Left cardiac atrium (tissue), 4 donors: ENCODE measurements at regions of chr21 and their contacts with region 1.

Region 1: GRCh38 chr21:40466893-40467501 is 380.0 kb downstream of the DSCAM start:
- DNase-seq: no peak
- ATAC-seq: no peak

Region 2: DNA sequence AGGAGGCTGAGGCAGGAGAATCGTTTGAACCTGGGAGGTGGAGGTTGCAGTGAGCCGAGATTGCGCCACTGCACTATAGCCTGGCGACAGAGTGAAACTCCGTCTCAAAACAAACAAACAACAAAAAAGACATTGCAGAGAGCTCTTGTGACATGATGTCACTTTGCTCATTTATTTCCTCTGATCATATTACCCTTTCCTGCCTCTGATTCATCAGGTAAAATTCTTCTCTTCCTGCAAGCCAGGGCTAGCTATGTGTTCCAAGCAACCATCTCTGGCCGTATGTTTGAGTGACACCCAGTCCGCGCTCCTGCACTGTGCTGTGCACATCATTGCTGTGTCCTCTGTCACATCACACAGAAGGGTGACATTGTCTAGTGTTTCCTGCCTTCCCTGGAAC is 348.5 kb before region 1 on chr21:
- intact Hi-C with region 1: no loop called
- DNase-seq: no peak
- ATAC-seq: no peak

Region 3: DNA sequence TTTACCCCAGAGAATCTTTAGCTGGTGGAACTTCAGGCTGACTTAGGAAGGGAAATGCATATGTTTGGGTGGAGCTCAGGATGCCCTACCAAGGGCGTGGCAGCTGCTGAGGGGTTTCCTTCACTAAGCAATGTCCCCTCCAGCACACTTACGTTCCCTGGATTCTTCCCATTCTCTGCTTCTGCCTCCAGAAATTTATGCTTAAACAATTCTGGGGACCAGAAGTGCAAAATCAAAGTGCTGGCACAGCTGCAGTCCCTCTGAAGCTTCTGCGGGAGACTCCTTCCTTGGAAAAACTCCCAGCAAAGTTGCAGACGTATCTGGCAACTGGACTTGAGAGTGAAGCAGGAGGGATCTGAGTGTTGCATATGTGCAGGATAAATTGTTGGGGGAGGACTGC is 196.9 kb before region 1 on chr21:
- intact Hi-C with region 1: no loop called
- DNase-seq: no peak
- ATAC-seq: no peak

Region 4: GRCh38 chr21:40512590-40512989 is 45.6 kb after region 1 on chr21:
- intact Hi-C with region 1: no loop called
- DNase-seq: no peak
- ATAC-seq: no peak

Region 5: GRCh38 chr21:40563900-40564299 is 96.9 kb after region 1 on chr21:
- intact Hi-C with region 1: no loop called
- DNase-seq: no peak
- ATAC-seq: no peak

Region 6: DNA sequence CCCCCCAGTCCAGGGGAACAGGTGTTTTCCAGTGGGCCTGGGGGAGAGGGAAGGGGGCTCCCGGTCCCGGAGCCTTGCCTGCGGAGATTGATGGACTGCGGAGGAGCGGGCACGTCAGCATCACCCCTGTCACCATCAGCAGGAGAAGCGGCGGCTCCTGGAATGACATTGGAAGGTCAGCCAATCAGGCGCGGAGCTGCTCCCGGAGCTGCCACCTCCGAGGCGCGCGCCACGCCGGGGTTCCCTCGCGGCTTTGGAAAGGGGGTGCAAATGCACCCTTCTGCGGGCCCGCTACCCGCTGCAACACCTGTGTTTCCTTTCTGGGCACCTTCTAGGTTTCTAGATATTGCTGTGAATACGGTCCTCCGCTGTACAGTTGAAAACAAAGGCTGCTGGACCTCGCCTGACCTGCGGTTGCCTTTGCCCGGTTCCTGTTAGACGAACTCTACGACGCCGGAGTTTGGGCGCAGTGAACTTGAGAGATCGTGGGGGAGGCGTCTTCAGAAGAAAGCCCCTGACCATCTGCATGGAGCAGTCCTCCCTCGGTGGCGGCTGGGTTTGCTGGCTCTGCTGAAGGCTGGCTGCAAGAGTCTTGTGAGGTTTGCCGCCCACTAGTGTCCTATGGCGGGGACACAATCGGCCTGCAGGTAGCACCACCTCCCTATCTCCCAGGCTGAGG is 374.7 kb after region 1 on chr21:
- intact Hi-C with region 1: loop called in 1 of 2 experiments (anchors 10 kb)
- DNase-seq: peak; percentile 43
- ATAC-seq: peak; percentile 53 to 62

Region 7: DNA sequence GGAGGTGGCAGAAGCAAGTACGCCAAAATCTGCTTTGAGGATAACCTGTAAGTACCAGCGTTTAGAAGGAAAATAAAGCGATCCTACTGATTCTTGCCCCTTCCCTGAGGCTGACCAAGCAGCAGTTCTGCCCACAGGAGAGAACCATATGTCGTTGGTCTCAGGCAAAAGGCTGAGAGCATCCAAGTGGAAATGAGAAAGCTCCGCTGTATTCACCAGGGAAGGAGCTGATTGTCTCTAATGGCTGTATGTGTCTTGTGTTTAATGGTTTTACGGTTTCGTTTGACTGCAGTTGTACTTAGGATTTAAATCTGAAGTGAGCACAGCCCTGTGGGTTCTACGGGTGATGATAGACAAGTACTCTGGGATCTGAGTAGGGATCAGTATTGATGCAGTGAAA is 871.5 kb after region 1 on chr21:
- intact Hi-C with region 1: loop called in 1 of 2 experiments (anchors 10 kb)
- DNase-seq: no peak
- ATAC-seq: no peak